PC-9 (cell line): ENCODE measurements at regions of chr2 and their contacts with region 1.

Region 1: DNA sequence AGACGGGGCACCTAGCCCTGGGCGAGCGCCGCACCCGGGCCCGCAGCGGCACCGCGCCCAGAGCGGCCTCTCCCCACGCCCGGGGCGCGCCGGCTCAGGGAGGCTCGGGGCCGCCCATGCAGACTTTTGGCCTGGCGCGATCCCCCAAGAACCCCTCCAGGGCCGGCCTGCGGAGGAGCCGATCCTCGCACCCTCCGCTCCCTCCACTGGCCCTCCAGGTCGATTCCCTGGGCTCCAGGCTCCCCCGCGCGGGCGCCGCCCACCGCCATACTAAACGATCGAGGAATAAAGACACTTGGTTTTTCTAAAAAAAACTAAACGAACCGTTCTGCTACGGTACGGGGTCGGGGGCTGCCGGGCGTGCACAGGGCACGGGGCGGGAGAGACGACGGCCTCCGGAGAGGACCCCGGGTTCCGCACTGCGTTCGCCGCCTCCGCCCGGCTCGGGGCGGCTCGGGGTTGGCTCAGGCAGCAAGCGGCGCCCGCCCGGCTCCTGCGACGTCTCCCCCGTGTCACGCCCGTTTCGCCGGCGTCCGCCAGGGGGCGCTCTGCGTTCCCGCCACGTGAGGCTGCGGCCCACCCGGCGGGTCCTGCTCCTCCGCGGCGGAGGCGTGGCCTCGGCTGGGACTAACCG is 365 bp upstream of the KHK start:
- DNase-seq: peak; percentile 79 to 97
- H3K4me3 ChIP-seq: peak overlapping the region; percentile 94
- H3K27ac ChIP-seq: no peak overlapping the region
- H3K4me1 ChIP-seq: peaks cover 25% of the 10 kb centered on the region
- H3K27me3 ChIP-seq: no peaks in the 10 kb centered on the region
- CTCF ChIP-seq: peak; percentile 76

Region 2: GRCh38 chr2:26846328-26847306 is 239.6 kb before region 1 on chr2:
- CTCF ChIA-PET with region 1: no interaction called
- POLR2A ChIA-PET with region 1: no interaction called
- intact Hi-C with region 1: loop called (anchors 2 kb)
- DNase-seq: peak; percentile 57
- H3K4me3 ChIP-seq: no peak overlapping the region
- H3K27ac ChIP-seq: no peak overlapping the region
- H3K4me1 ChIP-seq: no peaks in the 10 kb centered on the region
- H3K27me3 ChIP-seq: peaks cover 25% of the 10 kb centered on the region
- CTCF ChIP-seq: peak; percentile 83

Region 3: DNA sequence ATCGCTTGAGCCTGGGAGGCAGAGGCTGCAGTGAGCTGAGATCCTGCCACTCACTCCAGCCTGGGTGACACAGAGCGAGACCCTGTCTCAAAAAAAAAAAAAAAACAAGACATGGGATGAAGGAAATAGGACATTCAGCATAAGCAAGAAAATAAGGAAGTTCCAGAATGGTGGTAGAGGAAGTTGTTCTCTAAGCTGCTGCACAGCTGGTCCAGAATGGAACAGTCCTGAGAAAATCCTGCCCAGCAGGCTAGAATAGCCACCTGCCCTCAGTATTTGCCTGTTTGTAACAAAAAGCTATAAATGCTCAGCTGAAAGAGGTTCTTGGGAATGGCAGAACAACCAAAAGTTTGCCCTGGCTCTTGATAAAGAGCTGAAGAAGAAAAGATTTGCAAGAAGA is 126.9 kb before region 1 on chr2:
- CTCF ChIA-PET with region 1: interaction called, 4 read pairs
- POLR2A ChIA-PET with region 1: interaction called, 5 read pairs
- intact Hi-C with region 1: loop called (anchors 1 kb)
- DNase-seq: no peak
- H3K4me3 ChIP-seq: no peak overlapping the region
- H3K27ac ChIP-seq: no peak overlapping the region
- H3K4me1 ChIP-seq: peaks cover 10% of the 10 kb centered on the region
- H3K27me3 ChIP-seq: peaks cover 14% of the 10 kb centered on the region; the same call in 1 of the 2 replicates
- CTCF ChIP-seq: no peak

Region 4: GRCh38 chr2:27050281-27050995 is 35.8 kb before region 1 on chr2:
- CTCF ChIA-PET with region 1: interaction called, 3 read pairs
- POLR2A ChIA-PET with region 1: interaction called, 3 read pairs
- intact Hi-C with region 1: loop called (anchors 1 kb)
- DNase-seq: peak; percentile 93 to 95
- H3K4me3 ChIP-seq: peak overlapping the region; percentile 98
- H3K27ac ChIP-seq: peak overlapping the region; percentile 70
- H3K4me1 ChIP-seq: peaks cover 14% of the 10 kb centered on the region
- H3K27me3 ChIP-seq: no peaks in the 10 kb centered on the region
- CTCF ChIP-seq: peak; percentile 28; the same call in 1 of the 2 replicates

Region 5: GRCh38 chr2:27194538-27195354 is 108.5 kb after region 1 on chr2:
- CTCF ChIA-PET with region 1: no interaction called
- POLR2A ChIA-PET with region 1: no interaction called
- intact Hi-C with region 1: no loop called
- DNase-seq: no peak
- H3K4me3 ChIP-seq: no peak overlapping the region
- H3K27ac ChIP-seq: no peak overlapping the region
- H3K4me1 ChIP-seq: no peaks in the 10 kb centered on the region
- H3K27me3 ChIP-seq: no peaks in the 10 kb centered on the region
- CTCF ChIP-seq: no peak

Region 6: DNA sequence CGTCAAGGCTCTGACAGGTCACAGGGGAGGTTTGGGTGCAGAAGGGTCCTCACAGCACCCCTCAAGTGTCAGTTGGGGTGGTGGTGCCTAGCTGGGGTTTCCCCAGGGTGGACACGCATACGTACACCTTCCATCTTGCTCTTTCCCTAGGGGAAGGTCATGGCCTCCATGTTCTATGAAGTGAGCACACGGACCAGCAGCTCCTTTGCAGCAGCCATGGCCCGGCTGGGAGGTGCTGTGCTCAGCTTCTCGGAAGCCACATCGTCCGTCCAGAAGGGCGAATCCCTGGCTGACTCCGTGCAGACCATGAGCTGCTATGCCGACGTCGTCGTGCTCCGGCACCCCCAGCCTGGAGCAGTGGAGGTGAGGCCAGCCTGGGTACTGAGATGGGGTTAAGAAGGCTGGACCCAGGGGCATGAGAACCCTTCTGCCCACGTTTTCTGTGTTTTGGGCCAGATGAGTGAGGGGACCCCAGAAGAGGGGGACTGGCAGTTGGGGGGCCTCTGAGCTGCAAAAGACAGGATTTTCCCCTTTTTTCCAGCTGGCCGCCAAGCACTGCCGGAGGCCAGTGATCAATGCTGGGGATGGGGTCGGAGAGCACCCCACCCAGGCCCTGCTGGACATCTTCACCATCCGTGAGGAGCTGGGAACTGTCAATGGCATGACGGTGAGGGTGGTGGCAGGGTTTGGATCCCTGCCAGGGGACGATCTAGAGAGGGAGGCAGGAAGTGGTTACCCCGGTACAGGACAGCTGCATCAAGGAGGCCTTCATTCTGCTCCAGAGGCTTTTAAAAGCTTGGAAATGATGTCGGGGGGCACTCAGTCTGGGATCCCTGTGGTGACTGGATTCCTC is 155.8 kb after region 1 on chr2:
- CTCF ChIA-PET with region 1: interaction called, 26 read pairs
- POLR2A ChIA-PET with region 1: no interaction called
- intact Hi-C with region 1: no loop called
- DNase-seq: no peak
- H3K4me3 ChIP-seq: no peak overlapping the region
- H3K27ac ChIP-seq: no peak overlapping the region
- H3K4me1 ChIP-seq: no peaks in the 10 kb centered on the region
- H3K27me3 ChIP-seq: no peaks in the 10 kb centered on the region
- CTCF ChIP-seq: no peak